ENCODE measurements at regions of chr1 and their contacts with region 1.

Region 1: DNA sequence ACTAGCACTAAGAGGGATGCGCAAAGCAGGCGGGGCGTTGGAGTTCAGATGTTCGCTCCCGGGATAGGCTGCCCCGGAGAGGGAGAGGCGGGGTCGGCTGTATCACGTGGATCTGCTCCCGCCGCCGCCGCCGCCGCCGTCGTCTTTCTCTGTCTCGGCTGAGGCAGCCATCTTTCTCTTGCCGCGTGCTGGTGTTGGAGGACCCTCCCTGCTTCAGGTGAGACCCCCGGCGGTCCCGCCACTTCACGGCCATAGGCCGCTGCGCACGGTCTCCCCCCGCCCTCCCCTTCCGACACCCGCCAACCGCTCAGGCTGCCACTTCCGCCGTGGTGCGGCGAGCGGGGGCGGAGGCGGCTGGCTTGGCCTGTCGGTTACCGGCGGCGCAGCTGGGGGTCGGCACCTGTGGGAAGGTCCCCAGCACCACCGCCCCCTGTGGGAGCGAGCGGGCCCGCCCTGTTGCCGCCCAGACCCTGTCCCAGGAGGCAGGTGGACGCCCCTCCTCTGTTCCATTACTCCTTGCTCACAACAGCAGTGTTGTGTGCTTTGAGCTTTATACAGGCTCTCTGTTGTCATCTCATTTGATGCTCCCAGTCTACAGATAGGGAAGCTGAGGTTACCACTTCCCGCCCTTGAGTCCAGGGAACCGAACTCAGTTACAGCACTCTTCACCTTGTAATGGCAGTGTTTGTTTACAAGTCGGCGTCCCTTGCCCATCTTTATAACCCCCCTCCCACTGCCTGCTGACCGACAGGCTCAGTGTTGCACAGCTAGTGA is at the start of gene BTF3L4:
- DNase-seq: peak; percentile 93
- ATAC-seq: peak; percentile 89
- H3K4me3 ChIP-seq: peak within 1 kb of the TSS; percentile 73 to 99 (median 95)
- H3K4me3 Mint-ChIP-seq: peak within 1 kb of the TSS; percentile 98
- H3K27ac ChIP-seq: peak within 1 kb of the TSS; percentile 85 to 92
- H3K27ac Mint-ChIP-seq: peak within 1 kb of the TSS; percentile 97
- H3K4me1 ChIP-seq: peaks cover 25 to 31% of the 10 kb centered on the region in 2 donors
- H3K4me1 Mint-ChIP-seq: peaks cover 53% of the 10 kb centered on the region
- H3K27me3 ChIP-seq: no peaks in the 10 kb centered on the region
- H3K27me3 Mint-ChIP-seq: no peaks in the 10 kb centered on the region
- CTCF ChIP-seq: peak; percentile 17
- total RNA-seq, gene BTF3L4: 32.7 and 33.8 TPM in 2 replicates

Region 2: GRCh38 chr1:51616901-51617708 is 439.2 kb before region 1 on chr1 and contains the start of gene OSBPL9:
- CTCF ChIA-PET with region 1: no interaction called
- POLR2A ChIA-PET with region 1: no interaction called
- intact Hi-C with region 1: loop called (anchors 5 kb)
- DNase-seq: peak; percentile 92
- ATAC-seq: peak; percentile 98
- H3K4me3 ChIP-seq: peak within 1 kb of the TSS; percentile 87 to 93 (median 90)
- H3K4me3 Mint-ChIP-seq: peak within 1 kb of the TSS; percentile 100
- H3K27ac ChIP-seq: peak within 1 kb of the TSS; percentile 65 to 85
- H3K27ac Mint-ChIP-seq: peak within 1 kb of the TSS; percentile 99
- H3K4me1 ChIP-seq: peaks cover 11 to 19% of the 10 kb centered on the region in 2 donors
- H3K4me1 Mint-ChIP-seq: peaks cover 32% of the 10 kb centered on the region
- H3K27me3 ChIP-seq: no peaks in the 10 kb centered on the region
- H3K27me3 Mint-ChIP-seq: no peaks in the 10 kb centered on the region
- CTCF ChIP-seq: no peak
- total RNA-seq, gene OSBPL9: 59.6 and 63.8 TPM in 2 replicates

Region 3: DNA sequence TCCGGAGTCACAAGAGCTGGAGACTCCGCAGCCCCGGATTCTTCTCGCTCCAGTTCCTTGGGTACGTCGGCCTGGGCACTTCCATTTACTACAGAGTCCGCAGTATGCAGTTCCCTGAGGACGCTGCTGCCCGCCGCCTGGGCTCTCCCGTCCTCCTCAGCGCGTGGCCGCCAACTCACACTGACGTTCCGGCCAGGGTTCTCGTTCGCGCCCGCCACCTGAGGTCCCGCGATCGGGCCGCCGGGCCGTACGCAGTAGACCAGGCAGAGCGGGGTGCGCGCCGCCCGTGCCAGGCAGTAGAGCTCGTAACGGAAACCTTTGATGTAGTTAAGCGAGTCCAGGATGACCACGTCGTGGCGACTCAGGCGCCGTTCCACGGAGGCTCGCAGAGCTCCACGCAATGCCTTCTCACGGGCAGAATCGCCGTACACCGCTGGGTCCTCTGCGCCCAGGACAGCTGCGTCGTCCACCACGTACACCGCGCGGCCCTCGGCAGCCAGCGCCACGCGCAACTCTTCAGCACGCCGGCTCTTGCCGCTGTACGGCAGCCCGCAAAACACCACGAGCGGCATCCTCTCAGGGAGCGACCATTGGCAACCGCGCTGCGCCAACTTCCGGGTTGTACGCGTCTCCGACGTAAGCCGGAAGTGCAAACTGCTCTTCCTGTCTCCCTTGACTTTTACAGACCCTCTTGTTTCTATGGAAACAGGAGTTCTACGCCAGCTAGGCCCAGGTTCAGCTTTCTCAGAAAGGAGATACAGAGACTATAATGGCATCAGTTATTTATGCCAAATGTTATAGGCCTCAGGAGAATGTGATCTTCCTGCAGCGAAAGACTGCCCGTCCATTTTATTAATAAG is 22.9 kb before region 1 on chr1 and contains the start of gene KTI12:
- CTCF ChIA-PET with region 1: interaction called, 5 read pairs
- POLR2A ChIA-PET with region 1: interaction called, 9 read pairs
- intact Hi-C with region 1: loop called (anchors 1 kb)
- DNase-seq: peak; percentile 93
- ATAC-seq: peak; percentile 91
- H3K4me3 ChIP-seq: peak within 1 kb of the TSS; percentile 73 to 86 (median 83)
- H3K4me3 Mint-ChIP-seq: peak within 1 kb of the TSS; percentile 97
- H3K27ac ChIP-seq: peak within 1 kb of the TSS; percentile 71 to 86
- H3K27ac Mint-ChIP-seq: peak within 1 kb of the TSS; percentile 96
- H3K4me1 ChIP-seq: peaks cover 16 to 22% of the 10 kb centered on the region in 2 donors
- H3K4me1 Mint-ChIP-seq: peaks cover 34% of the 10 kb centered on the region
- H3K27me3 ChIP-seq: no peaks in the 10 kb centered on the region
- H3K27me3 Mint-ChIP-seq: no peaks in the 10 kb centered on the region
- CTCF ChIP-seq: no peak
- total RNA-seq, gene KTI12: 14.7 and 16.1 TPM in 2 replicates

Region 4: DNA sequence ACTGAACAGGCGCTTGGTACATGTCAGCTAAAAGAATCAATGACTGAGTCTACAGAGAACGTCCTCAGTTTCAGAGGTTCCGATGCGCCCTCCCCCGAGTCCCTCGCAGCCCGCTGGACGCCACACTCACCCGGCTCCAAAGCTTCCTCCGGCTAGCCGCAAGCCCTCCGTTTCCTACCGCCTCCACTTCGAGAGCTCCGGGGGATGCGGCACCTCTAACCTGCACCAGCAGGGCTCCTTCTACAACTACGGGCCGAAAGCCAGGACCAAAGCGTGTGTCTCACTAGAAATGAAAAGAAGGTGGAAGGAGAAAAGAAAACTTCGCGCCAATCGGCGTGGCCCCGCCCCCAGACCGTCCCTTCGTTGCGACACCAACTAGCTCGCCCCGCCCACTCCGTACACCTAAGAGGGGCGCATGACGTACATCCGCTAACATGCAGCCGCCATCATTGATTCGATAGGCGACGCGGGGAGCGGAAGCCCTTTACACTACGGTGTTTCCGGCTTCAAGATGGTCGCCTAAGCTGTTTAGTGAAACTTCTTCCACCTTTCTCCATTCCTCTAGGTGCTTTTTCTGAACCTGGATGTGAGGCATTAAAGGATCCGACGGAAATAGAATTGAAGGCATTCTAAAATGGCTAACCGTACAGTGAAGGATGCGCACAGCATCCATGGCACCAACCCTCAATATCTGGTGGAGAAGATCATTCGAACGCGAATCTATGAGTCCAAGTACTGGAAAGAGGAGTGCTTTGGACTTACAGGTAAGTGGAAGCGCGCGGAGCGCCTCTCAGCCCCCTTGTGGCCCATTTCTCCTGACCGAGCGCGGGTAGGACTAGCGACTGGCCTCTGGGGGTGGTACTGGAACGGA is 348.0 kb after region 1 on chr1 and contains the starts of genes ORC1 and PRPF38A:
- CTCF ChIA-PET with region 1: no interaction called
- POLR2A ChIA-PET with region 1: interaction called, 5 read pairs
- intact Hi-C with region 1: loop called (anchors 1 kb)
- DNase-seq: peak; percentile 98
- ATAC-seq: peak; percentile 98
- H3K4me3 ChIP-seq: peak within 1 kb of the TSS; percentile 76 to 99 (median 95)
- H3K4me3 Mint-ChIP-seq: peak within 1 kb of the TSS; percentile 100
- H3K27ac ChIP-seq: peak within 1 kb of the TSS; percentile 91 to 95
- H3K27ac Mint-ChIP-seq: peak within 1 kb of the TSS; percentile 96
- H3K4me1 ChIP-seq: peaks cover 15 to 22% of the 10 kb centered on the region in 2 donors
- H3K4me1 Mint-ChIP-seq: peaks cover 32% of the 10 kb centered on the region
- H3K27me3 ChIP-seq: no peaks in the 10 kb centered on the region
- H3K27me3 Mint-ChIP-seq: no peaks in the 10 kb centered on the region
- CTCF ChIP-seq: peak; percentile 60
- total RNA-seq, gene ORC1: 1.3 TPM in 2 replicates
- total RNA-seq, gene PRPF38A: 68.1 and 69.8 TPM in 2 replicates

Region 5: DNA sequence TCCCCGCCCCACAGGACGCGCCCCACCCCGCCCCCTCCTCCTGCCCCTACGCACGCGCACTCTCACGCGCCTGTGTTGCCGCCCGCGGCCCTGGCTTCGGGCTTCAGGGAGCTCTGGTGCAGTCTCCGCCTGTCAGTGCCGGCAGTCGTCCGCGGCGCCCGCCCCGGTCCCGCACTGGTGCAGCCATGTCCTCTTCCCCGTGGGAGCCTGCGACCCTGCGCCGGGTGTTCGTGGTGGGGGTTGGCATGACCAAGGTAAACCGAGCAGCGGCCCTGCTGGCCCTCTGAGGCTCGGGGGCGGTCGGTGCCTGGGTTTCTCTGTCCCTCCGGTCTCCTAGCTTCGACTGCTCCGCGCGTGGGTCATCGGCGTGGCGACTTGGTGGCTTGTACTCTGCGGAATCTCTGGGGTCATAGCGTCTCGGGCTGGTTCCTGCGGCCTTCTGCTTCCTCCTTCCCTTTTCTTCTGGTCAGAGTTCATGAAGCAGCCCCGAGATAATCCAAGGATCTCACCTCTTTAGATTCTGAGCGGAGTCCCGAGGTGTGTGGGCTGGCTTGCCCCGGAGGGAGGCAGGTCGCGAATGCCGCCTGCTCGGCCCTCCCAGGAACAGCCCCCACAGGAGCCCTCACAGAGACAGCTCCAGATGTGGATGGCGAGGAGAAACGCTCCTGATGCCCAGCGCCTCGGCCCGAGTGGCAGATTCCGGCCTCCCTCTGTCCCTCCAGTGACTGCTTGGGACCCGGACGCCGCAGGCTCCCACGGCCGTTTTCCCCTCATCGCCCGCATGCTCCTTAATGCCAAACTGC is 871.1 kb after region 1 on chr1 and contains the start of gene SCP2:
- CTCF ChIA-PET with region 1: no interaction called
- POLR2A ChIA-PET with region 1: no interaction called
- intact Hi-C with region 1: loop called (anchors 10 kb)
- DNase-seq: peak; percentile 72
- ATAC-seq: peak; percentile 86
- H3K4me3 ChIP-seq: peak within 1 kb of the TSS; percentile 59 to 85 (median 82)
- H3K4me3 Mint-ChIP-seq: peak within 1 kb of the TSS; percentile 89
- H3K27ac ChIP-seq: peak within 1 kb of the TSS in 1 of 2 donors; percentile 61
- H3K27ac Mint-ChIP-seq: peak within 1 kb of the TSS; percentile 22
- H3K4me1 ChIP-seq: peaks cover 10 to 19% of the 10 kb centered on the region in 2 donors
- H3K4me1 Mint-ChIP-seq: peaks cover 19% of the 10 kb centered on the region
- H3K27me3 ChIP-seq: peaks cover 0 to 20% (median 7%) of the 10 kb centered on the region in 4 experiments
- H3K27me3 Mint-ChIP-seq: peaks cover 12% of the 10 kb centered on the region
- CTCF ChIP-seq: no peak
- total RNA-seq, gene SCP2: 45.0 and 46.6 TPM in 2 replicates

Region 6: DNA sequence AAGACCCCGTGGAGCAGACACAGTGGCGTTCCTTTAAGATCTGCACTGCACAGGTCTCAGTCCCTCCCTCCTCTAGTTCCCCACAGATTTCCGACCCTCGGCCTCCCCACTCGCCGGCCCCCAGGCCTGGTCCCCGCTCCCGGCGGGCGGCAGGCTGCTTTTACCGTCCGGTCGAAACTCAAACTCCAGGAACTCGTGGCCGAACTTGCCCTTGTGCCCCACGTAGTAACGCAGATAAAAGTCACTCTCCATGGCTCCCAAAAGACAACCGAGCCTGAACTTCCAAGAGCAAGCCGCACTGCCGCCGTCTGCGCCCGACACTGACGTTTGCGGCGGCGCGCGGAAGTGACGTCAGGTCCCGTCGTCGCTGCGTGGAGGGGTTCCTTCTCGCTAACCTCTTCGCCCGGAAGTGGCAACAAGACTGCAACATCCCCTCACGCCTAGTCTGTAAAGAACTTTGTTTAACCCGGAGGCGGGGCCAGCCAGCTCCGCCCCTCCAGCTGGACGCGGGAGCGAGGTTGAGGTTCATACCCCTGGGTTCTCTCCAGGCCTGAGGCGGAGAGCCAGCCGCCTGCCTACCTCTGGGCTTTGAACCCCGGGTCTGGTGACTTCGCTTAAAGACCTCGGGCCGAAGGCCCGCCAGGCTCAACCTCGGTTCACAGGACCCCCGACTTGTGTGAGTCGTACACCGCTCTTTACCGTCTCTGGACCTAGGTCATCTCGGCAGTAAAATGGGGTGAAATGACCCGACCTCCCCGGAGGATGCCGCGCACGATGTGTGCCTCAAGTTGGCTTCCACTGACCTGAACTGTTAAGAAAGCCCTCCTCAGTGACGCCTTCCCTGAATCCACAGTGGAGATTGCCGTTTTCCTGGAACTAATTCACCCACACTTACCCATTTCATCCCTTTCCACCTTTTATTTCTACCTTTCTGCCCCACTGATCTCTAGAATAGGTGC is 1182.1 kb after region 1 on chr1 and contains the start of gene MAGOH:
- CTCF ChIA-PET with region 1: no interaction called
- POLR2A ChIA-PET with region 1: no interaction called
- intact Hi-C with region 1: loop called (anchors 2 kb)
- DNase-seq: peak; percentile 95
- ATAC-seq: peak; percentile 99
- H3K4me3 ChIP-seq: peak within 1 kb of the TSS; percentile 94 to 98 (median 98)
- H3K4me3 Mint-ChIP-seq: peak within 1 kb of the TSS; percentile 99
- H3K27ac ChIP-seq: peak within 1 kb of the TSS; percentile 70 to 89
- H3K27ac Mint-ChIP-seq: peak within 1 kb of the TSS; percentile 96
- H3K4me1 ChIP-seq: peaks cover 18 to 26% of the 10 kb centered on the region in 2 donors
- H3K4me1 Mint-ChIP-seq: peaks cover 29% of the 10 kb centered on the region
- H3K27me3 ChIP-seq: no peaks in the 10 kb centered on the region
- H3K27me3 Mint-ChIP-seq: no peaks in the 10 kb centered on the region
- CTCF ChIP-seq: no peak
- total RNA-seq, gene MAGOH: 36.2 and 45.6 TPM in 2 replicates